ENCODE measurements at regions of chr16 and their contacts with region 1.

Region 1: DNA sequence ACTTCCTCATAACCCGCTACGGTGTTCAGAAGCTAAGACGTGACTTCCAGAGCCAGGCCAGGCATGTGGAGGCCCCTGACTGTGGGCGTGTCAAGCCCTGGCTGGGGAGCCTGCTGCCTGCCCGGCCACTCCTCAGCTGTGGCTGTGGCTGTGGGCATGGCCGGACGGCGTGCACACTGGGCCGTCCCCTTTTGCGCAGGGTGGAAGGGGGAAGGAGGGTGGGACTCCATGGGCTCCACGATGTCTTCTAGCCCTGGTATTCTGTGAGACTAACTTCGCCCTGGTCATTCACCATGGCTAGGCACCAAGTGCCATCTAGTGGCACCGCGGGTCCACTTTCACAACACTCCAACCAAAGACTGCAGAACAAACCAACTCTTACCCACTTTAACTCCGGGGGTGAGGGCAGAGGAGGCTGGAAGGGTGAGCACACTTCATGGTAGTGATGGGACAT is 67.9 kb downstream of the N4BP1 start:
- DNase-seq: peak; percentile 71
- ATAC-seq: peak; percentile 68

Region 2: DNA sequence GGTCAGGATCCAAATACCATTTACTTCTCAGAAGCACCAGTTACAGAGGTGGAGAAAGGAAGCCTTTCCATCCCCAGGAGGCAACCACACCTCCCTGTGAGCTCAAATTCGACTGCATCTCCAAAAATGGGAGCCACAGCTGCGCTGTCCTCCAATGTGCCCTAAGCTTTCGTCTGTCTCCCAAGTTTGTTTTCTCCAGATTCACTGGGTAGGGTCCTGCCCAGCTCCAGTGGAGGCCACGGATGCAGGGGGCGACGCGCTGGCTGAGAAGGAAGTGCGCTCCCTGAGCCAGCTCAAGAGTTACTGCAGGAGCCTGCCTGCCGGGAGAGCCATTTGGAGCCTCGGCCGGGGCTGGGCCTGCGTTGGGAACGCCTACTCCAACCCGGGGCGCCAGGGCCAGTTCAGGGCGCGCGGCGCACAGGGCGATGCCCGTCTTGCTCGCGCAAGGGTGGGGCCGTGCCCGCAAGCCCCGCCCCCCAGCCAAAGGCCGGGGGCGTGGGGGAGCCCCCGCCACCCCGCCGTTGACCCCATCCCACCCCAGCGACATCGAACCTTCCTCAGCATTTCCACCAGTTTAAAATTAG is 176.4 kb before region 1 on chr16:
- intact Hi-C with region 1: loop called (anchors 10 kb)
- DNase-seq: peak; percentile 95
- ATAC-seq: peak; percentile 99